B cell (primary cell): ENCODE measurements at regions of chr4 and their contacts with region 1.

Region 1: DNA sequence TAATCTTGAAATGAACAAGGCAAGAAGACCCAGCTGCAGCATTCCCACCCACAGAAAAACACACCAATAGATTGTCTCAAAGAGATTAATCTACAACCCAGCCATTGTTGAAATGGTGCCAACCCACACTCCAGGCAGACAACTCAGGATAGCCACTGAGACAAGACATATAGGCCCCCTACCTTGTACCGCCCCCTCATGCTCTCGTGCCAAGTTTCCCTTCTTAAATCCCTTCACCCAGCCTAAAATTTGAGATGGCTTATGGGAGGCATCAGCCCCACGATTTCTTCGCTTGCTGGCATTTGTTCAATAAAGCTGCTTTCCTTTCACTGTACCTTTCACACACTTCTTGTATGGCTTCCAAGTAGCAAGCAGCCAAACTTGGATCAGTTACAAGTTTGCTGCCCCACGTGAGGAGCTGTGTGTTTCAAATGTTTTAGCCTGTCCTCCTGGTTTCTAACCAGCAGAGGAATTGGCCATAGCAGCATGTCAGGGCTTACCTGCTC is 1754.1 kb downstream of the C4orf33 start:
- DNase-seq: no peak
- ATAC-seq: no peak
- H3K4me3 ChIP-seq: no peak overlapping the region
- H3K4me3 Mint-ChIP-seq: no peak overlapping the region
- H3K27ac ChIP-seq: no peak overlapping the region
- H3K27ac Mint-ChIP-seq: no peak overlapping the region
- H3K4me1 ChIP-seq: no peaks in the 10 kb centered on the region
- H3K4me1 Mint-ChIP-seq: no peaks in the 10 kb centered on the region
- H3K27me3 ChIP-seq: no peaks in the 10 kb centered on the region
- H3K27me3 Mint-ChIP-seq: no peaks in the 10 kb centered on the region
- CTCF ChIP-seq: no peak

Region 2: GRCh38 chr4:130486186-130486585 is 363.9 kb before region 1 on chr4:
- CTCF ChIA-PET with region 1: no interaction called
- POLR2A ChIA-PET with region 1: no interaction called
- intact Hi-C with region 1: loop called (anchors 5 kb)
- DNase-seq: no peak
- ATAC-seq: no peak
- H3K4me3 ChIP-seq: no peak overlapping the region
- H3K4me3 Mint-ChIP-seq: no peak overlapping the region
- H3K27ac ChIP-seq: no peak overlapping the region
- H3K27ac Mint-ChIP-seq: no peak overlapping the region
- H3K4me1 ChIP-seq: no peaks in the 10 kb centered on the region
- H3K4me1 Mint-ChIP-seq: no peaks in the 10 kb centered on the region
- H3K27me3 ChIP-seq: no peaks in the 10 kb centered on the region
- H3K27me3 Mint-ChIP-seq: no peaks in the 10 kb centered on the region
- CTCF ChIP-seq: no peak

Region 3: DNA sequence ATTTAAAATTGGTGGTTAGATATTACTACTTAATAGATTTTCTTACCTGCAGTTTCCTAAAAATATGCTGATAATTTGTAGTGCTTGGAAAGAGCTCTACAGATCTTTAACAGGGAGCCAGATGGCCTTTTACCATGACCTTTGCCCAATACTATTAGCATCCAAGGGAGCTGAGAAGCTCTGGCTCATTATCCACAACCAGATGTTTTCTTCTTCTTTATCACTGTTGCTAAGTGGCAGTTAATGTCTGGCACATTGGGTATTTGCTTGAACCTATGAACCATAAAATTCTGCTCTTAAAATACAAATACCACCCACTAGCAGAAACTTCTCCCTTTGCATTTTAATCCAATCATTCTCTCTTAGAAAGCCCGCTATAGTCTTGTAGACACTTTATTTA is 273.9 kb before region 1 on chr4:
- CTCF ChIA-PET with region 1: no interaction called
- POLR2A ChIA-PET with region 1: no interaction called
- intact Hi-C with region 1: no loop called
- DNase-seq: no peak
- ATAC-seq: no peak
- H3K4me3 ChIP-seq: no peak overlapping the region
- H3K4me3 Mint-ChIP-seq: no peak overlapping the region
- H3K27ac ChIP-seq: no peak overlapping the region
- H3K27ac Mint-ChIP-seq: no peak overlapping the region
- H3K4me1 ChIP-seq: no peaks in the 10 kb centered on the region
- H3K4me1 Mint-ChIP-seq: no peaks in the 10 kb centered on the region
- H3K27me3 ChIP-seq: no peaks in the 10 kb centered on the region
- H3K27me3 Mint-ChIP-seq: no peaks in the 10 kb centered on the region
- CTCF ChIP-seq: no peak